Sigmoid colon (tissue), 7 donors: ENCODE measurements at regions of chr3 and their contacts with region 1.

Region 1: DNA sequence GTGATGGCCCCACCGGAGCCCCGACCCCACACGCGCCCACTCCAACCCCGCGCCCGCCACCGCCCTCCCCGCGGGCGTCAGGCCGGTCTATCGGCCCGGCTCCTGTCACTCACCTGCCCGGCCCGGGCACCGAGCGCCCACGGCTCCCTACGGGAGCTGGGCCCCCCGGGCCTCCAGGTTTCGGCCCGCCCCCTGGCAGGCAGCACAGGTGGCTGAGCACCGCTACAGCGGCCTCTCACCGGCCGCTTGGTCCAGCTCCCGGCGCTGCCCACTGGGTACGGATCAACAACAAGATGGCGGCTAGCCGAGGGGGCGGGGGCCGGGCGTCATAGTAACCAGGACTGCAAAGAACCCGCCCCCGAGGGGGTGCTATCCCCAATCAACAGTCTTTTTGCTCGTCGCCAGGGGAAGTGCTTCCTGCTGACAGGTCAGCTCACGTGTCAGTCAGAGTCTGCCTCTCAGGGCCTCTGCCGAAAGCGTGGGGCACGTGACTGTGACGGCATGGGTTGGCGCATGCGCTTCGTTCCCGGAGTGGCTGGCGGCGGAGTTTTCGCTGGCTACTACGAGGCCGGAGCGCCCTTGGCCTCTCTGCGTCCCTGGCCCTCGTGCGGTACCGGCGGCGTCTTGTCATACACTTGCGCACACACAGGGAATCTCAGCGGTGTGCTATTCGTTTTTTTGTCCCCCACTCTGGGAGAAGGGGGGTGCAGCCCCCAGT is at the start of gene IP6K1:
- DNase-seq: peak; percentile 100
- H3K4me3 ChIP-seq: peak within 1 kb of the TSS; percentile 97 to 100 (median 100)
- H3K27ac ChIP-seq: peak within 1 kb of the TSS; percentile 93 to 99 (median 99)
- H3K4me1 ChIP-seq: peaks cover 0 to 49% (median 48%) of the 10 kb centered on the region in 4 donors
- H3K27me3 ChIP-seq: no peaks in the 10 kb centered on the region
- CTCF ChIP-seq: no peak
- EP300 ChIP-seq: no peak
- POLR2A ChIP-seq: peak; percentile 79 to 84
- total RNA-seq, gene IP6K1: 29.1 to 37.1 (median 33.7) TPM

Region 2: DNA sequence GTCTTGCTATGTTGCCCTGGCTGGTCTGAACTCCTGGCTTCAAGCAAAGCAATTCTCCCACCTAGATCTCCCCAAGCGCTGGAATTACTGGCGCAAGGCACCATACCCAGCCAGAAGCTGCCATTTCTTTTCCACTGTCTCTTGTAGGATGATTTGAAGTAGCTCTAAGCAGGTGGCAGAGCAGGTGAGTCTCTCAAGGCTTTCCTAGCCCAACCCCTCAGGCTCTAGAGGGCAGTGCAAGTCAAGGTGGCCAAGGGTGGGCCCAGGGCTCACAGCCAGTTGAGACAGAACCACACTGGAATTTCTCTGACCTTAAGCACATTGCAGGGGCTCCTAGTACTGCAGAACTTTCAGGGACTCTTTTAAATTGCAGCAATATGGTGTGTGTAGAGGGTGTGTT is 331.9 kb before region 1 on chr3:
- intact Hi-C with region 1: no loop called
- DNase-seq: no peak
- H3K4me3 ChIP-seq: no peak overlapping the region
- H3K27ac ChIP-seq: no peak overlapping the region
- H3K4me1 ChIP-seq: peaks cover 0 to 7% (median 0%) of the 10 kb centered on the region in 4 donors
- H3K27me3 ChIP-seq: no peaks in the 10 kb centered on the region
- CTCF ChIP-seq: no peak
- EP300 ChIP-seq: no peak
- POLR2A ChIP-seq: no peak

Region 3: GRCh38 chr3:49723628-49724551 is 62.5 kb before region 1 on chr3 and contains the start of gene GMPPB:
- intact Hi-C with region 1: loop called (anchors 5 kb)
- DNase-seq: peak; percentile 98
- H3K4me3 ChIP-seq: peak within 1 kb of the TSS; percentile 90 to 99 (median 93)
- H3K27ac ChIP-seq: peak within 1 kb of the TSS; percentile 92 to 96 (median 94)
- H3K4me1 ChIP-seq: peaks cover 0 to 45% (median 33%) of the 10 kb centered on the region in 4 donors
- H3K27me3 ChIP-seq: no peaks in the 10 kb centered on the region
- CTCF ChIP-seq: no peak
- EP300 ChIP-seq: no peak
- POLR2A ChIP-seq: peak; percentile 41 to 54
- total RNA-seq, gene GMPPB: 9.9 to 14.3 (median 10.8) TPM